ENCODE measurements at regions of chr17 and their contacts with region 1.

Region 1: DNA sequence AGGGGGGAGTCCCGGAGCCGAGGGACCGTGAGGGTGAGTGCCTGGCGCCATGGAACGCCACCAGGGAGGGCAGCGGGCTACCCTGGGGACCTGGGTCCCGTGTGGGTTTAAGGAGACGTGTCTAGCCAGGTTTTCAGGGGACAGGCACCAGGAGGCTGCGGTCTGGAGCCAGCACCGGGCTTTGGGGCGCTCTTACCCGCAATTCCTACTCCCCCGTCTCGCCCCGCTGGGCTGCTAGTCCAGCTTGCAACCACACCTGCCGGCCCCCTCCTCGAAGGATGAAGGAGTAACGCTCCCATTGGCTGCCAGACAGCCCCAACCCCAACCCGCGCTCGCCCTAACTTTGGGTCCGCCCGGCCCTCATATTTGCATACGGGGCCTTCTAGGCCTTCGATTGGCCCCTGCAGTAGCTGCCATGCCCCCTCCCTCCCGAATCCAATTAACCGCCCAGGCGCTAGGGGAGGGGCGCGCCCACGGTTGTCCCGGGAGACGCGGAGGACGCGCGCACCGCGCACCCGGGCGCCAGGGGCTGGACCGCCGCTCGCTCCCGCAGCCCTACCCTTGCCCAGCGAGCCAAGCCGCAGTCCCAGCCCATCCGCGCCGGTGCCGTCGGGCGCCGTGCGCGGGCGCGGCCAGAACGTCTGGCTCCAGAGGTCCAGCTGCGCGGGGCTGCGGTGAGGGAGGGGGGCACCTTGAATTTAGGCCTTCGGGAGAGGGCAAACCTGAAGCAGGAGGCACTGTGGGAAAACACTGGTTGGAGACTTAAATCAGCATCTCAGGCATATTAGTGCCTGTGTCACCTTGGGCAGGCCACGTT is at the start of gene TTLL6:
- DNase-seq: peak; percentile 92
- H3K4me3 Mint-ChIP-seq: peak within 1 kb of the TSS; percentile 39
- H3K27ac Mint-ChIP-seq: no peak within 1 kb of the TSS
- H3K4me1 Mint-ChIP-seq: peaks cover 10% of the 10 kb centered on the region
- H3K27me3 Mint-ChIP-seq: peaks cover 11% of the 10 kb centered on the region
- CTCF ChIP-seq: no peak
- total RNA-seq, gene TTLL6: not detected in 2 replicates

Region 2: DNA sequence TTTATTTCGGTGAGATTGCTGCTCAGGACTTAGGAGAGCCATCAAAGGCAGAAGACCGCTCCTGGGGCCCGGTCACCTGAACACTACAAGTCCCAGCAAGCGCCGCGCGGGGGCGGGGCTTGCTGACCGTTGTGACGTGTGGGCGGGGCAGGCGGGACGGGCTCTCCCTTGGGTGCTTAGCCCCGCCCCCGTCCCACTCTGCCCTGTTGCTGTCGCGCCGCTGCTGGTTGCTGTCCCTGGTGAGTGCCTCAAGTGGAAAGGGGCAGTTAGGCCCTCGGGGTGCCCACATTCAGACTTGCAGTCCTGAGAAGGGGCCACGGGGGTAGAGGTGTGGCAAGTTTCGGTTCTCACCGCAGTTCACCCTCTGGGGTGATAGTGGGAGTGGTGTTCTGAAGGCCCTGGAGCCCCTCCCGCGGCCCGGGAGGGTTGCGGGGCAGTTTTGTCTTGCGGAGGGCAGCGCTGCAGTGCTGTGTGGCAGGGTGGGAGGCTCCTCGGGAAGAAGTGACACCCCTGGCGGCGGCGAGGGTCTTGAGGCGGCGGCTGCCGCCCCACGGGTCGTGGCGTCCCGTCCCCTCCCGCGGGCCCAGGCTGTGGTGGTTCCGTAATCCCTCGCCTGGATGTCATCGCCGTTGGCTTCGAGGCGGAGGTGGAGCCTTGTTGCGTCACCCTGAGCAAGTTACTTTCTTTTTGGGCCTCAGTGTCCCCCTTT is 14.0 kb after region 1 on chr17 and contains the start of gene CALCOCO2:
- CTCF ChIA-PET with region 1: interaction called, 6 read pairs
- POLR2A ChIA-PET with region 1: interaction called, 11 read pairs
- intact Hi-C with region 1: no loop called
- DNase-seq: peak; percentile 95
- H3K4me3 Mint-ChIP-seq: peak within 1 kb of the TSS; percentile 94
- H3K27ac Mint-ChIP-seq: peak within 1 kb of the TSS; percentile 96
- H3K4me1 Mint-ChIP-seq: no peaks in the 10 kb centered on the region
- H3K27me3 Mint-ChIP-seq: no peaks in the 10 kb centered on the region
- CTCF ChIP-seq: no peak
- total RNA-seq, gene CALCOCO2: 96.1 and 113 TPM in 2 replicates

Measured in MCF 10A (cell line).